ENCODE measurements at regions of chr1 and their contacts with region 1.

Region 1: DNA sequence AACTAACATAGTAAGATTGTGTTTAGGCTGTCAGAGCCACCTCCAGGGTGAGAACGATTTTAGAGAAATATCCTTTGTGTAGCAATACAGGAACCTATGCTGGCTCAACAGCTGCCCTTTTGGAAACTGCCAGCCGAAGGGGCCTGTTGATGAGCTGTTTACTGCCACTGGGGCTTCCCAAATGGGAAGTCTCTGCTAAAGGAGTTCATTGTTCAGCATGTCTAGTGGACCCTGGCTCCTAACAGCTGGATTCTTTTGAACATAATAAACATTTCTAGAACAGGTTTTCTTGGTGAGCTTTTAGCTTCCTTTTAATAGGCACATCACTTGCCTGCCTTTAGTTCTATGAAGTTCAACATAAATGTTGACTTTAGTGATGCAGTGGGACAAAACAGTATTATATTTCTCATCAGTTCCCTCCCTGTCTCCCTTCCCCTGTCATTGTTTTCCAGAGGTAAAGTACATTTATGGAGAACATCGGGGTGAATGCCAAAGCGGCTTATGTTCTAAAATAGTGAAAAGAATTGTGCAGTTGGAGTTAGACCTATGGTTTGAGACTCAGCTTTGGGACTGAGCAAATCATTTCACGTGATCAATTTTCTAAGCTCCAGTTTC is 57.4 kb downstream of the UCK2 start:
- DNase-seq: no peak

Region 2: GRCh38 chr1:163999131-163999530 is 1885.7 kb before region 1 on chr1:
- intact Hi-C with region 1: loop called in 1 of 2 experiments (anchors 5 kb)
- DNase-seq: no peak

Region 3: GRCh38 chr1:165815725-165816124 is 69.1 kb before region 1 on chr1:
- intact Hi-C with region 1: no loop called
- DNase-seq: no peak

Measured in posterior vena cava (tissue), 2 donors.